ENCODE measurements at regions of chr7 and their contacts with region 1.

Region 1: DNA sequence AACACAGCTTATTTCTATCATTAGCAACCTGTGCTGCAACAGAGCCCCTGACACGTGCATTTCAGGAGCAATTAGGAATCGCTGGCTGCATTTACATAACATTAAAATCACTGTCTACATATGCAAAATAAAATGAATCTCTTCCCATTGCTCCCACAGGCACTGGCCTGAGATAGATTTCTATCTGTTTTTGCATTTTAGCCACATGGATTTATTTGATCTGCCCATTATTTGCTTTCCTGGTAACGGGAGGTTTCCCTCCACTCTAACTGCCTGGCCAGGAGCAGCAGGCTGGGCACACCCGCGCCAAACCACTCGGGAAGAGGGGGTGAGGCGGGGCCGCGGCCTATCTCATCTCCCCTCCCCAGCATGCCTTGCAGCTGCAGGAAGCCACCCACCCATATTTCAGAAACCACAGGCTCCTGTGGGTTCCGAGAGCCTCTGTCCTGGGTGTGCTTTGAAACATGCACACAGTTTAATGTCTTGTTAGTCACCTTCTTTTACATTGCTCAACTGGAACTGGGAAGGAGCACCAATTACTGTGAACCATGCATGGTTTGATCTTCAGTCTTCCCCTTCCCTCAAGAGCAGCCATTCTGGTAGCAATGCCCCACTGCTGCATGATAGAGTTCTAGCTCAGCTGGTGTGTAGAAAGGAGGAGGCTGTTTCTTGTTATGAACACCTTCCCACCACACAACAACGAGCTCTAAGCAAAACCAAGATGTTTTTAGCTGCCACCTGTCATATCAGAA is 37.7 kb upstream of the IKZF1 start:
- DNase-seq: peak; percentile 48 to 84
- ATAC-seq: peak; percentile 48 to 72 (median 70)
- H3K4me3 ChIP-seq: no peak overlapping the region
- H3K4me3 Mint-ChIP-seq: peak overlapping the region; percentile 94
- H3K27ac ChIP-seq: peak overlapping the region; percentile 71
- H3K27ac Mint-ChIP-seq: peak overlapping the region; percentile 89 to 97
- H3K4me1 ChIP-seq: peaks cover 79% of the 10 kb centered on the region
- H3K4me1 Mint-ChIP-seq: peaks cover 83 to 85% of the 10 kb centered on the region in 2 donors
- H3K27me3 ChIP-seq: no peaks in the 10 kb centered on the region
- H3K27me3 Mint-ChIP-seq: no peaks in the 10 kb centered on the region
- CTCF ChIP-seq: no peak

Region 2: DNA sequence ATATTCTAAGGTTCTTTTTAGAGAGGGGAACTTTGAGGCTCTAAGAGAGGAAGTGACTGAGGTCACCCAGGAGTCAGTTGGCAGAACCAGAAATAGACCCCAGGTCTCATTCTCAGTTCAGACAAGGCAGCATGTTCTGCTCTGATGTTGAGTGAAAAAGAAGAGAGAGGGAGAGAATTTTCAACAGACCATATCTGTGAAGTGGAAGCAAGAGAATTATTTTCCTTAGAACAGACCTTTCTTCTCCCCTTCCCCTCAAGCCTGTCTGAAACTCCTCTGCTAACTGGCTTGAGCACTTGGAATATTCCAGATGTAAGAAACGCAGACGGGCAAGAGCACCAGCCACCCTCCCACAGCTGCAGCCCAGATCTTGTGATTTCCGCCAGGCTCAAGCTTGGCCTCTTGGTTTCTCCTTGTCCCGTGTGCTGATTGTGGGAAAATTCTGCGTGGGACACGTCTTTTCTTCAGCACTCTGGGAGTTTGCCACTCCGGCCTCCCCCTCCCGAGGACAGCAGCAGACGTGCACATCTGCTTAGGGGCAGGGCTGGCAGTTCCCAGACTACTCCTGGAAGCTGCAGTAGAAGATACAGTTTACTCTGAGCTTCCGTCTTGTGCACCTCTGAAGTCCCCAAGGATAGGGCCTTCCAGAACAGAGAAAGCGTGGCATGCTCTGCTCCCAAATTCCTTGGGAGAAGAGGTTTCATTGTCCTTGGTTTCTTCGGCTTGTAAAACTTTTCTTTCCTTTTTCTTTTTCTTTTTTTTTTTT is 15.1 kb after region 1 on chr7:
- intact Hi-C with region 1: loop called (anchors 2 kb)
- DNase-seq: peak in 1 of 2 donors; percentile 52
- ATAC-seq: peak; percentile 80 to 85 (median 82)
- H3K4me3 ChIP-seq: no peak overlapping the region
- H3K4me3 Mint-ChIP-seq: peak overlapping the region; percentile 73
- H3K27ac ChIP-seq: peak overlapping the region; percentile 64
- H3K27ac Mint-ChIP-seq: peak overlapping the region; percentile 88 to 91
- H3K4me1 ChIP-seq: peaks cover 45% of the 10 kb centered on the region
- H3K4me1 Mint-ChIP-seq: peaks cover 43 to 51% of the 10 kb centered on the region in 2 donors
- H3K27me3 ChIP-seq: no peaks in the 10 kb centered on the region
- H3K27me3 Mint-ChIP-seq: no peaks in the 10 kb centered on the region
- CTCF ChIP-seq: no peak

Region 3: GRCh38 chr7:50307368-50308032 is 40.7 kb after region 1 on chr7:
- intact Hi-C with region 1: loop called (anchors 2 kb)
- DNase-seq: peak; percentile 48 to 87
- ATAC-seq: peak; percentile 39 to 63 (median 54)
- H3K4me3 ChIP-seq: peak overlapping the region; percentile 96
- H3K4me3 Mint-ChIP-seq: peak overlapping the region; percentile 99
- H3K27ac ChIP-seq: peak overlapping the region; percentile 93
- H3K27ac Mint-ChIP-seq: peak overlapping the region in 1 of 2 donors; percentile 98
- H3K4me1 ChIP-seq: peaks cover 33% of the 10 kb centered on the region
- H3K4me1 Mint-ChIP-seq: peaks cover 66 to 75% of the 10 kb centered on the region in 2 donors
- H3K27me3 ChIP-seq: no peaks in the 10 kb centered on the region
- H3K27me3 Mint-ChIP-seq: no peaks in the 10 kb centered on the region
- CTCF ChIP-seq: no peak

Measured in natural killer cell (primary cell).